Colonic mucosa (tissue), 4 donors: ENCODE measurements at regions of chr2 and their contacts with region 1.

Region 1: GRCh38 chr2:168699844-168700417 is 102.5 kb upstream of the NOSTRIN start:
- DNase-seq: peak; percentile 93
- H3K4me3 ChIP-seq: no peak overlapping the region
- H3K27ac ChIP-seq: peak overlapping the region; percentile 40
- H3K4me1 ChIP-seq: no peaks in the 10 kb centered on the region
- H3K27me3 ChIP-seq: no peaks in the 10 kb centered on the region
- CTCF ChIP-seq: no peak

Region 2: DNA sequence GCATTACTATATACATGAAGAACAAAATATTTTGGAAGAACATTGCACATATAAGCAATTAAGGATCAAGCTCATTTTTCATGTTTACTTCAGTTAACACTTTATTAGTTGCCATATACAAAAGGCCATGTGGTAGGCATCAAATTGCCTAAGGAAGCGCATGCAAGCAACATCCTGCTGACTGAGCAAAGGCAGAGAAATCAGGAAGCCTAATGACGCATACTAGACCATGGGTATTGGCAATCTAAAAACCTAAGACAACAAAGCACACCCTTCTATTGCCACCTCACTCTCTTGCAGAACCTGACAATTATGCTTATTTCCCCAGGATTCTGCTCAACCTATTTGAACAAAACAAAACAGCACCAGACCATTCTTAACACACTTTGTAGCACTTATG is 624.5 kb before region 1 on chr2:
- intact Hi-C with region 1: no loop called
- DNase-seq: no peak
- H3K4me3 ChIP-seq: no peak overlapping the region
- H3K27ac ChIP-seq: no peak overlapping the region
- H3K4me1 ChIP-seq: no peaks in the 10 kb centered on the region
- H3K27me3 ChIP-seq: no peaks in the 10 kb centered on the region
- CTCF ChIP-seq: no peak

Region 3: DNA sequence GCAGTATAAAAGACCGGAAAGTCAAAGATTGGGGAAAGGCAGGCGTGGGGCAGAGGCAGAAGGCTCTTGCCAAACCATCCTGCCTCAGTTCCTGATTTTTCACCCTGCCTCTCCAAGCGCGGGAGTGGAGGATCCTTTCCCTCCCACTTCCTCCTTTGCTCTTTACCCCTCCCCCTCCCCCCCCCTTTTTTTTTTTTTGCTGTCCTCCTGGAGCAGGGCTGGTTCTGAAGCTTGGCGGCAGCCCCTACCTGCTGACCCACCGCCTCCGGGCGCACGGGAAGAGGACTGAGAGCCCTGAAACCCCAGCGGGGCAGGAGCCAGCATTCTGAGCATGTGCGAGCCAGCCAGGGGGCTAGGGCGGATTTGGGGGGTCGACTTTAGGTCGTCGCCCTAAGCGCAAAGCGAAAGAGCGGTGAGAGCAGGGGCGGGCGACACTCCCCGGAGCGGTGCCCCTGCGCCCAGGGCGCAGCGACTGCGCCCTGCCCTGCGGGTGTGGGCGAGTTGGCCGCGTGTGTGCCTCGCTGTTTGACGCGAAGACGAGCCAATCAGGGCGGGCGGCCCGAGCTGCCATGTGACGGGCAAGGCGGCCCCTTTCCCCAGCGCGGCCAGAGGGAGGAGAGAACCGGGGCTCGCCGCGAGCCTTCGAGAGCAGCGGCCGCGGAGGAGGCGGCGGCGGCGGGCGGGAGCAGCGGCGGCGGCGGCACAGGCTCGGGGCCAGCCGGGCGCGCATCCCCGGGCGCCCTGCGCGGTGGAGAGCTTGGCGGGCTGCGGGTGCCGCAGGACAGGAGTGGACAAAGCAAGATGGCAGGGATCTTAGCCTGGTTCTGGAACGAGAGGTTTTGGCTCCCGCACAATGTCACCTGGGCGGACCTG is 244.0 kb before region 1 on chr2 and contains the start of gene CERS6:
- intact Hi-C with region 1: loop called (anchors 10 kb)
- DNase-seq: peak; percentile 97
- H3K4me3 ChIP-seq: peak within 1 kb of the TSS; percentile 87
- H3K27ac ChIP-seq: peak within 1 kb of the TSS; percentile 90
- H3K4me1 ChIP-seq: no peaks in the 10 kb centered on the region
- H3K27me3 ChIP-seq: no peaks in the 10 kb centered on the region
- CTCF ChIP-seq: no peak
- total RNA-seq, gene CERS6: 56.7 to 75.9 TPM

Region 4: GRCh38 chr2:168626096-168626495 is 73.8 kb before region 1 on chr2:
- intact Hi-C with region 1: no loop called
- DNase-seq: peak; percentile 48
- H3K4me3 ChIP-seq: no peak overlapping the region
- H3K27ac ChIP-seq: peak overlapping the region; percentile 32
- H3K4me1 ChIP-seq: no peaks in the 10 kb centered on the region
- H3K27me3 ChIP-seq: no peaks in the 10 kb centered on the region
- CTCF ChIP-seq: no peak

Region 5: DNA sequence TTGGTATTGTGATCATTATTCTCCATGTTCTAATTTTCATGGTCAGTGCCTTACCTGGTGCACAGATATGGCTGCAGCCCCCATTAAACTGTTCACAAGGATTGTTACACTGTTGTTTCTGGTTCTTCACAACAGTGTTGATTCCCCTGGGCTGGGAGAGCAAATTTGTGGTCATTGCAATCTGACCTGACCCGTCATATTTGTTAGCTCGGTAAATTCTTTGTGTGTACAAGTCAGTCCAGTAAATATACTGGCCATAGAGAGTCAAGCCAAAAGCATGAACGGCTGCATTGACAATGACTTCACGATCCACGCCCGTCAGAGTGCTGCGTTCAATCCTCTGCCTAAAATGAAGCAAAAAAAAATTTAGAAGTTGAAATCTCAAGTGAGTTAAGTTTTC is 504.0 kb after region 1 on chr2:
- intact Hi-C with region 1: no loop called
- DNase-seq: no peak
- H3K4me3 ChIP-seq: no peak overlapping the region
- H3K27ac ChIP-seq: no peak overlapping the region
- H3K4me1 ChIP-seq: no peaks in the 10 kb centered on the region
- H3K27me3 ChIP-seq: no peaks in the 10 kb centered on the region
- CTCF ChIP-seq: no peak

Region 6: GRCh38 chr2:169507698-169508097 is 807.8 kb after region 1 on chr2:
- intact Hi-C with region 1: no loop called
- DNase-seq: no peak
- H3K4me3 ChIP-seq: no peak overlapping the region
- H3K27ac ChIP-seq: no peak overlapping the region
- H3K4me1 ChIP-seq: no peaks in the 10 kb centered on the region
- H3K27me3 ChIP-seq: no peaks in the 10 kb centered on the region
- CTCF ChIP-seq: no peak